Activated T-helper 1 cell treated with anti-CD3 and anti-CD28 coated beads, Interleukin-12 subunit alpha, Interleukin-12 subunit beta, Interleukin-2, Interleukin-4 antibody, amounts not matched to agents 30 ng/mL and 10 ng/mL and 1 ng/mL, durations not matched to agents 14 hours and 24 hours and 36 hours (primary cell): ENCODE measurements at regions of chr15 and their contacts with region 1.

Region 1: GRCh38 chr15:31163746-31164563 is 62.4 kb upstream of the TRPM1 start:
- DNase-seq: no peak
- H3K4me3 Mint-ChIP-seq: no peak overlapping the region
- H3K27ac Mint-ChIP-seq: no peak overlapping the region
- H3K4me1 Mint-ChIP-seq: peaks cover 20% of the 10 kb centered on the region
- H3K27me3 Mint-ChIP-seq: peaks cover 2% of the 10 kb centered on the region

Region 2: DNA sequence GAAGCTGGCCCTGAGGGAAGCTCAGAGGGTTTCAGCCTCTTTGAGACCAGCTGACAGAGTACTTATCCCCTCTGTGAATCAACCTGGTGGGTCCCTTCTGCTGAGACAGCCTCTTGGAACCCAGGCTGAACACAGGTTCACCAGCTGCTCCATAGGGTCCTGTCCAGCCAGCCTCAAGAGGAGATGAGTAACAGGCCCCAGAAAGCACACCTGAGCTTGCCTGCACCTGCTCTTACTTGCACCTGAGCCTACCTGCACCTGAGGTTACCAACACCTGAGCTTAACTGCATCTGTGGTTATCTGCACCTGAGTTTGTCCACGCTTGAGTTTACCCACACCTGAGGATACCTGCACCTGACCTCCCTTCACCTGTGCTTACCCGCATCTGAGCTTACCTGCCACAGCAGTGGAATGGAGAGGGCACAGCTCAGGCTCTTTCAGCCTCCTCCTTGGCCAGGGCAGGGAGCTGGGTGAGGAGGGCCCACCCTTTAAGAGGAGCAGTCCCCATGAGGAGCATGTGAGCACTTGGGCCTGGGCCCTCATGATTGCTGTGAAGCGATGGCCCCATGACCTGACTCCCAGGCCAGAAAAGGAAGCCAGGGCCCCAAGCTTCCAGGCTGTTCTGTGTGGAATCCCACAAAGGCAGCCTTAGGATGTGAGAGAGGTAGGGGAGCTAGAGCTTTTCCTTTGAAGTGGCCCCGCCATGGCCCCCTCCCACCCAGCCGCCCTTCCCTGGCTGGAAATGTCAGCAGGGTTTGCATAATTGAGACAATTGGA is 62.5 kb before region 1 on chr15 and contains the start of gene TRPM1:
- intact Hi-C with region 1: loop called (anchors 10 kb)
- DNase-seq: no peak
- H3K4me3 Mint-ChIP-seq: no peak within 1 kb of the TSS
- H3K27ac Mint-ChIP-seq: no peak within 1 kb of the TSS
- H3K4me1 Mint-ChIP-seq: no peaks in the 10 kb centered on the region
- H3K27me3 Mint-ChIP-seq: no peaks in the 10 kb centered on the region
- total RNA-seq, gene TRPM1: not detected in 2 replicates

Region 3: GRCh38 chr15:31116423-31117030 is 47.4 kb before region 1 on chr15:
- intact Hi-C with region 1: no loop called
- DNase-seq: no peak
- H3K4me3 Mint-ChIP-seq: no peak overlapping the region
- H3K27ac Mint-ChIP-seq: no peak overlapping the region
- H3K4me1 Mint-ChIP-seq: no peaks in the 10 kb centered on the region
- H3K27me3 Mint-ChIP-seq: peaks cover 23% of the 10 kb centered on the region

Region 4: DNA sequence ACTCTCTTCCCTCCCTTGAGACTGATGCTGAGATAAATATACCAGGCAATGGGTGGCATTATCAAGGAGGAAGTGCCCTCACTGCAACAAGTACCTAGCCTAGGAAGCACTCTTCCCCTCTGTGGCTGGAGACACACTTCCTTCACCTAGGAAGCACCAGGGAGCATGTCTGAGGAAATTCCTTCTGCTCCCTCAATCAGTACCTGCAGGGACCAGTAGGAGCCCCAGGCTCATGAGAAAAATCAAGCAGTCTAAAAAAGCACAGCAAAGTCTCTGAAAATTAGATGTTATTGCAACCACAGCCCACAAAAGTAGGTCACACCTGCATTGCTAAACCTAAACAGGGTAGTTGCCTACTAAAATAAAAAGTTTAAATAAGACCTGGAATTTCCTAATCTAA is 15.7 kb after region 1 on chr15:
- intact Hi-C with region 1: loop called (anchors 1 kb)
- DNase-seq: no peak
- H3K4me3 Mint-ChIP-seq: no peak overlapping the region
- H3K27ac Mint-ChIP-seq: no peak overlapping the region
- H3K4me1 Mint-ChIP-seq: peaks cover 11% of the 10 kb centered on the region
- H3K27me3 Mint-ChIP-seq: peaks cover 3% of the 10 kb centered on the region